Activated CD4-positive, alpha-beta T cell treated with anti-CD3 and anti-CD28 coated beads, Interleukin-2, amount 10 ng/mL, durations not matched to agents 24 days and 14 days (primary cell): ENCODE measurements at regions of chr9 and their contacts with region 1.

Region 1: DNA sequence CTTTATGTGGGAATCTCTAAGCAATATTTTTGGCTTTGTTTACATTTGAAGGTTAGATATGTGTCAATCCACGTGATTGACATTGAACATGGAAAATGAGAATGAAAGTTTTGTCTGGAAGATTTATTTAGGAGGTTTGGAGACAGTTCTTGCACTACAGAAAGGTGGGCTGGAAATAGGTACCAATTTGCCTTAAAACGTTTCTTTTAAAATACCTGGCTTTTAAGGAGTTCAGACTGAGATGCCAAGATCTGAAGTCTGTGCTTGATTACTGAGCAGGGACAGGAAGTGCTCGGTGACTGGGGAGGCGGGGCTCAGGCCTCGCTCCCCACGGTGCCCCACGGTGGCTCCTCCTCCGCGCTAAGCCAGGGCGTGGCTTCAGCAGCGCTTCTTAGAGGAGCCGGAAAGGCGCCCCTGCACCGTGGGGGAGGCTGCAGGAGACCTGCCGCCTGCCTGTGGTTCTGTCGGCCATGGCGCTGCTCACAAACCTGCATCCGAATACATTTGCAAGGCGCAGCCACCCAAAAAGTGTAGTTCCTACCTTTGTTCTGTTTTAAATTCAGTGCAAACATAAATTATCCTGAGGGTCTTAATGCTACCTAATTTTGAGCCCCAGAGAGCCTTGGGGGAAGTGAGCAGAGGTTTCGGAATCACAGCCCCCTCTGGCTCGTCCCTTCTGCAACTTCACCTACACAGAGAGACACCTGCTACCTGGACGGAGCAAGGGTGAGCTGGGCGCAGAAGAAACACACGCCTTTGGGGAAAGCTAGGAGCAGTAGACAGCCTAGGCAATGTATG is 49.2 kb downstream of the USP20 start:
- DNase-seq: peak; percentile 99
- H3K4me3 Mint-ChIP-seq: peak overlapping the region; percentile 83
- H3K27ac Mint-ChIP-seq: peak overlapping the region; percentile 98
- H3K4me1 Mint-ChIP-seq: peaks cover 51% of the 10 kb centered on the region
- H3K27me3 Mint-ChIP-seq: no peaks in the 10 kb centered on the region

Region 2: DNA sequence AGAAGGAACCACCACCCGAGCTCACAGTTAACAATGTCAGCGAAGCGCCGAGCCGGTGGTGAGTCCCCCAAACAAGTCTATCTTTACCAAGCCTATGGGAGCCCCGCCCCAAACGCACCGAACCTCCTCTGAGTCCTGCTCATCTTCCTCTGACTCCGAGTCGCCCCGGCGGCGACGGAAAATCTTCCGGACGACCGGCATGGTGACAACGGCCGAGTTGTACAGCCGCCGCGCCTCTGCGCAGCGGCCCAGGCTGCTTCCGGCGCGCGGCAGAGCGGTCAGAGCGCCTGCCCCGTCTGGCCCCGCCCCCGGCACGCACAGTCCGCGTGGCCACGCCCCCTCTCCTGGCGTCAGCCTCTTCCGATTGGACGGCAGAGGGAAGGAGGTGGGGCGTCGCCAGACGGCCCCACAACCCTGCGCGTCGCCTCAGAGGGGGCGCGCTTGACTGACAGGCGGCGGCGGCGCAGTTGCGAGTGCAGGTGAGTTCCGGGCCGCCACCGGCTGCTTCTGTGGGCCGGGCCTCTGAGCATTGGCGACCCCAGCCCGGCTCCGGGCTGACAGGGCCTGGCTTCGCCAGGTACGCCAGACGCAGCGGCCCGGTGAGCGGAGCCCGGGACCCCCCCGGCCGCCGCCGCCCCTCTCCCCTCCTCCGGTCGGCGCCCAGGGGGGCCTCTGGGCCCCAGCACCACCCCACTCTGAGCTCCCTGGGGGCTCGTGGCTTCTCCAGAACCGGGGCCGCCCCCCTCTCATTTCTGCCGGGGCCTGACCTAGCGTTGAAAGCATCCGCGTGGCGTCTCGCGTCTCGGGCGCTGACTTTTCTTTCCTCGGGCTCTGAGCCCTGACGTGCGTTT is 49.2 kb before region 1 on chr9 and contains the starts of genes C9orf78 and USP20:
- intact Hi-C with region 1: loop called (anchors 1 kb)
- DNase-seq: peak; percentile 99
- H3K4me3 Mint-ChIP-seq: peak within 1 kb of the TSS; percentile 93
- H3K27ac Mint-ChIP-seq: peak within 1 kb of the TSS; percentile 95
- H3K4me1 Mint-ChIP-seq: peaks cover 50% of the 10 kb centered on the region
- H3K27me3 Mint-ChIP-seq: no peaks in the 10 kb centered on the region
- total RNA-seq, gene C9orf78: 59.9 and 60.9 TPM in 2 replicates
- total RNA-seq, gene USP20: 44.3 and 47.2 TPM in 2 replicates

Region 3: DNA sequence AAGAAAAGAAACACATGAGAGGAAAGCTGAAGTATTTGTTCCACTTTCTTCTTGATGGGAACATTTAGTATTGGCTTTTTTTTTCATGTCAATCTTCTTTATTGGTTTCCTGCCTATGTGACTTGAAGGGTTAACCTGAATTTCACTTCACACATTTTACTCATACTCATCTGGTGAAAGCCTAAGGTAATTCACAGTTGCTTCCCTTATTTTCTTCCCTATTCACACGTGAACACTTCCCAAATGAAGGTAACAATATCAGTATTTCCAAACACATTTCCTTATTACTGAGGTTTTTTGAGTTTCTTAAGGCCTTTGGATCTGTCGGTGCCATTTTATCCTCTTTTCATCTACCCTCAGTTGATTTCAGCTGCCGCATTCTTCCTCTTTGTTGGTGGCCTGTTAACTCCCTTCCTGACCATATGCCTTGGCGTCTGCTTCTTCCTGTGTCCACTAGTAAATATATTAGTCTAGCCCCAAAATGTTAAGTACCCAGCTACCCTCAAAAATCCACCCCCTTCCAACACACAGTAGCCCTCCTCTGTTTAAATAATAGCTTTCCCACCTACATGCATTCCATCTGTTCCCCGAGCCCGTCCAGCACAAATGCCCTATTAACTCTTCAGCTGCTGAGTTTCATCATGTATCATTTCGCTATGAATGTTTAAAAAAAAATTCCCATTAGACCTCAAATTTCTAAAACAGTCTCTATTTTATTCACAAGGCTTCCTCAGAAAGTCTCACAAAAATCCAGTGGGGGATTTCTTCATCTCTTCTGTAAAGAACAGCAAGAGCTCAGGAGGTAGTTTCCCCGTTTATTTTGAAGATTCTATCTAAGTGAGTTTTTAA is 48.1 kb after region 1 on chr9:
- intact Hi-C with region 1: loop called (anchors 1 kb)
- DNase-seq: no peak
- H3K4me3 Mint-ChIP-seq: peak overlapping the region; percentile 78
- H3K27ac Mint-ChIP-seq: peak overlapping the region; percentile 93
- H3K4me1 Mint-ChIP-seq: peaks cover 56% of the 10 kb centered on the region
- H3K27me3 Mint-ChIP-seq: no peaks in the 10 kb centered on the region

Region 4: DNA sequence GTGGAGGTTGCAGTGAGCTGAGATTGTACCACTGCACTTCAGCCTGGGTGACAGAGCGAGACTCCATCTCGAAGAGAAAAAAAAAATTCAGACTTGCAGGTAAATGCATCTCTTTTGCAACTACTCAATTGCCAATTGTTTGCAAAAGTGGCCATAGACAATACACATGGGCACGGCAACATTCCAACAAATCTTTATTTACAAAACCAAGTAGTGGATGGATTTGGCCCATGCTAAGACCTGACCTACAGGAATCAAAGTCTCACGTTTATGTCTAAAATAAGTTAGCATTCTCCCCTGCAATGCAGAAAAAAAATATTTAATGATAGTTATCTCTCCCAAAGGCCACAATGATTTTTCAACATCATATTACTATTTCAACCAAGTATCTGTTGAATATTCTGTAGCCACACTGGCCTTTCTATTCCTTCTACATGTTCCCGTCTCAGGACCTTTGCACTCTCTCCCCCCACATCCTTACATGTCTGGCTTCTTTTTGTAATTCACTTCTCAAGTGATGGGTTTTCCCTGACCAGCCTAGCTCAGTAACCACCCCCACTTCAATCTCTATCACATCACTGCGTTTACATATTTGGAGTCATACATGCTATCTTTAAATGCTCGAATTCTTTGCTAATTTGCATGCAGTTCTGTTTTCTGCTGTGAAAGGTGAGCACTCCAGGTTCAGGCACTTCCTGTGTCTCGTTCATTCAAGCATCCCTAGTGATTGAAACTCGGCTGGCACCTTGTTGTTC is 104.4 kb after region 1 on chr9:
- intact Hi-C with region 1: loop called (anchors 1 kb)
- DNase-seq: peak; percentile 66
- H3K4me3 Mint-ChIP-seq: peak overlapping the region; percentile 31
- H3K27ac Mint-ChIP-seq: peak overlapping the region; percentile 92
- H3K4me1 Mint-ChIP-seq: peaks cover 49% of the 10 kb centered on the region
- H3K27me3 Mint-ChIP-seq: no peaks in the 10 kb centered on the region

Region 5: GRCh38 chr9:130128733-130129431 is 244.5 kb after region 1 on chr9:
- intact Hi-C with region 1: loop called (anchors 1 kb)
- DNase-seq: peak; percentile 81
- H3K4me3 Mint-ChIP-seq: peak overlapping the region; percentile 79
- H3K27ac Mint-ChIP-seq: peak overlapping the region; percentile 97
- H3K4me1 Mint-ChIP-seq: peaks cover 43% of the 10 kb centered on the region
- H3K27me3 Mint-ChIP-seq: no peaks in the 10 kb centered on the region

Region 6: GRCh38 chr9:130352081-130352480 is 467.7 kb after region 1 on chr9:
- intact Hi-C with region 1: no loop called
- DNase-seq: no peak
- H3K4me3 Mint-ChIP-seq: no peak overlapping the region
- H3K27ac Mint-ChIP-seq: no peak overlapping the region
- H3K4me1 Mint-ChIP-seq: no peaks in the 10 kb centered on the region
- H3K27me3 Mint-ChIP-seq: no peaks in the 10 kb centered on the region

Region 7: GRCh38 chr9:131277910-131278701 is 1393.7 kb after region 1 on chr9:
- intact Hi-C with region 1: loop called (anchors 5 kb)
- DNase-seq: peak; percentile 90
- H3K4me3 Mint-ChIP-seq: peak overlapping the region; percentile 91
- H3K27ac Mint-ChIP-seq: peak overlapping the region; percentile 95
- H3K4me1 Mint-ChIP-seq: peaks cover 25% of the 10 kb centered on the region
- H3K27me3 Mint-ChIP-seq: peaks cover 14% of the 10 kb centered on the region